ENCODE measurements at regions of chr19 and their contacts with region 1.

Region 1: GRCh38 chr19:42132851-42133528 is 744 bp upstream of the POU2F2 start:
- DNase-seq: peak in 1 of 2 donors; percentile 71
- H3K4me3 ChIP-seq: peak overlapping the region; percentile 14 to 51
- H3K27ac ChIP-seq: no peak overlapping the region
- H3K4me1 ChIP-seq: peaks cover 3 to 9% of the 10 kb centered on the region in 2 donors
- H3K27me3 ChIP-seq: peaks cover 4% of the 10 kb centered on the region
- CTCF ChIP-seq: peak; percentile 95 to 97 (median 95)

Region 2: DNA sequence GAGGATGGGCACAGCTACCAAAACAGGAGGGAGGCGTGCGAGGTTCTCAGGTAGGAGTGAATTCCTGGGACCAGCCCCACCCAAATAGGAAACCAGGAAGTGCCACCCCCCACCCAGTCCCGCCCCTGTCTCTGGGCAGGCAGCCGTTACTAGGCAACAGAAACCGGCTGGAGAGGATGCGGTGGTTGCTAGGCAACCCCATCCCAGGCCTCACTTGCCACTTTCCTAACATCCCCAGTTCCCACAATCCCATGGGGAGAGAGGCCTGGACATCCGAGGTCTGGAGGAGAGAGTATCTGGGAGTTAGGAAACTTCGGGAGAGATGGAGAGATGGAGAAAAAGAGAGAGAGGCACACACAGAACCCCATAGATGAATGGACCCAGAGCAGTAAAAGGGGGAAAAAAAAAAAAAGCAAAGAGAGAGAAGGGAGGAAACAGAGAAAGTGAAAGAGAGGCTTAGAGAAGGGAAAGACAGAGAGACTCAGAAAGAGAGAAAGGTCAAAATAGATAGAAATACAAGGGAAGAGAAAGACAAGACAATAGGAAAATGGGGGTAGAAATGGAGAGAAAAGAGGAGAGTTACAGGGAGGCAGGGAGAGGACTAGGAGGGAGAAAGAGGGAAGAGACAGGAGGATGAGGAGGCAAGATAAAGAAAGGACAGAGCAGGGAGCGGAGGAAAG is 66.8 kb before region 1 on chr19:
- intact Hi-C with region 1: no loop called
- DNase-seq: no peak
- H3K4me3 ChIP-seq: no peak overlapping the region
- H3K27ac ChIP-seq: no peak overlapping the region
- H3K4me1 ChIP-seq: peaks cover 0 to 7% of the 10 kb centered on the region in 2 donors
- H3K27me3 ChIP-seq: no peaks in the 10 kb centered on the region
- CTCF ChIP-seq: no peak

Region 3: GRCh38 chr19:42184401-42184861 is 51.4 kb after region 1 on chr19:
- intact Hi-C with region 1: loop called (anchors 2 kb)
- DNase-seq: peak in 1 of 2 donors; percentile 87
- H3K4me3 ChIP-seq: no peak overlapping the region
- H3K27ac ChIP-seq: no peak overlapping the region
- H3K4me1 ChIP-seq: no peaks in the 10 kb centered on the region
- H3K27me3 ChIP-seq: peaks cover 8% of the 10 kb centered on the region
- CTCF ChIP-seq: peak; percentile 68 to 82 (median 76)

Region 4: DNA sequence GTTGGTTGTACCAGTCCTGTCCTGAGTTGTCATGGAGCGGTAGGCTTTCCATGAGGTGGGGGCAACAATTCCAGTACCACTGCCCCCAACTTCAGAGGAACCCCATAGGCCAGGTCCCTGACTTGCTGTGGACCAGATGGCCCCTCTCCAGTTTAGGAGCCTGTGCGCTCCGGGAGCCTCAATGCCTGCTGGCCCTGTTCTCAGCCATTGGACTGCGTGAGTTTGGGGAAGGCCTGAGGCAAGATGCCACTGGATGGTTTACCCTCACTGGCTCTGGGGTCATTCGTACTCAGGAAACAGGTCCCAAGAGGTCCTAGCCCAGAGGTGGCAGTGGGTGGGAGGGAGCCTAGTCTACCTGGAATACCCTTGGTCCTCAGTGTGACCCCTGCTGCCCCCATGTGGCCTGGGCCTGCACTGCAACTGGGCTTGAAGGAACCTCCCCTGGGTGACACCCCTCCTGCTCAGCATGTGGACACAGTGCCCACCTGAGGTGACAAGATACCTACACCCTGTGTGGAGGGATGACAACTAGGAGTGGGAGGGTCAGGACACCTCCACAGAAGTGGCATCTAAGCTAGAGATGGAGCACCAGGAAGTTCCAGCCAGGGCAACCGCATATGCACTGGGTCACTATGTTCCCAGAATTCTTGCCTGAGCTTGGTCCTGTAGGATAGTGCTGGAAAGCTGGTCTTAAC is 163.0 kb after region 1 on chr19:
- intact Hi-C with region 1: loop called (anchors 2 kb)
- DNase-seq: peak in 1 of 2 donors; percentile 92
- H3K4me3 ChIP-seq: no peak overlapping the region
- H3K27ac ChIP-seq: no peak overlapping the region
- H3K4me1 ChIP-seq: no peaks in the 10 kb centered on the region
- H3K27me3 ChIP-seq: no peaks in the 10 kb centered on the region
- CTCF ChIP-seq: peak; percentile 89 to 96 (median 93)

Region 5: DNA sequence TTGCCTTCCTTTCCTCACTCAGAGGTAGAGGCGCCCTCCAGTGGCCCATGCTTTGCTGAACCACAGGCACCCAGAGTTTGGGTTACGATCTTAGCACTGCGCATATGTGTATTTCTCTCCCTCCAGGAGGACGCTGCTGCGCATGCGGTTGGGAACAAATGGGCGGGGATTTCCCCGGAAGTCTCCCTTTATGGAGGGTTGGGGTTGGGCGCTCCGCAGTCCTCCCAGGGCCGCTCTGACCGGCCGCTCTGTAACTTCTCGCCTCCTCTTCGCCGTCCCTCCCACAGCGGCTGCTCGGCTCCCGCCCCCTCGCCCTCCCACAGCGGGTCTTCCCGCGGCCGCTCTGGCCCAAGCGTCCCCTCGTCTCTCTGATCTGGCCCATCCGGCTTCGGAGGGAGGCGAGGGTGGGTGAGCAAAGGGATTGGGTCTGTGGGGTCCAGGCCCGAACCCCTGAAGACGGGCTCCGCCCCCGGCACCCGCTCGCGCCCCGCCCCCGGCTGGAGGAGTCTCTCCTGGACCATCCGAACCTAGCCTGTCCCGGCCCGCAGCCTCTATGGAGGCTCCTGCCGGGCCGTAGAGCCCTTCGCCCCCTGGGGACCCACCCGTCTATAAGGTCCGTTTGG is 192.4 kb after region 1 on chr19 and contains the start of gene MEGF8:
- intact Hi-C with region 1: loop called (anchors 2 kb)
- DNase-seq: peak; percentile 92 to 99
- H3K4me3 ChIP-seq: peak within 1 kb of the TSS; percentile 66 to 85
- H3K27ac ChIP-seq: peak within 1 kb of the TSS; percentile 38 to 48
- H3K4me1 ChIP-seq: peaks cover 5 to 29% of the 10 kb centered on the region in 2 donors
- H3K27me3 ChIP-seq: peaks cover 11% of the 10 kb centered on the region
- CTCF ChIP-seq: peak; percentile 81 to 89 (median 82)
- total RNA-seq, gene MEGF8: 61.8 TPM

Region 6: GRCh38 chr19:42360787-42361544 is 228.0 kb after region 1 on chr19:
- intact Hi-C with region 1: no loop called
- DNase-seq: no peak
- H3K4me3 ChIP-seq: no peak overlapping the region
- H3K27ac ChIP-seq: no peak overlapping the region
- H3K4me1 ChIP-seq: no peaks in the 10 kb centered on the region
- H3K27me3 ChIP-seq: no peaks in the 10 kb centered on the region
- CTCF ChIP-seq: no peak

Region 7: DNA sequence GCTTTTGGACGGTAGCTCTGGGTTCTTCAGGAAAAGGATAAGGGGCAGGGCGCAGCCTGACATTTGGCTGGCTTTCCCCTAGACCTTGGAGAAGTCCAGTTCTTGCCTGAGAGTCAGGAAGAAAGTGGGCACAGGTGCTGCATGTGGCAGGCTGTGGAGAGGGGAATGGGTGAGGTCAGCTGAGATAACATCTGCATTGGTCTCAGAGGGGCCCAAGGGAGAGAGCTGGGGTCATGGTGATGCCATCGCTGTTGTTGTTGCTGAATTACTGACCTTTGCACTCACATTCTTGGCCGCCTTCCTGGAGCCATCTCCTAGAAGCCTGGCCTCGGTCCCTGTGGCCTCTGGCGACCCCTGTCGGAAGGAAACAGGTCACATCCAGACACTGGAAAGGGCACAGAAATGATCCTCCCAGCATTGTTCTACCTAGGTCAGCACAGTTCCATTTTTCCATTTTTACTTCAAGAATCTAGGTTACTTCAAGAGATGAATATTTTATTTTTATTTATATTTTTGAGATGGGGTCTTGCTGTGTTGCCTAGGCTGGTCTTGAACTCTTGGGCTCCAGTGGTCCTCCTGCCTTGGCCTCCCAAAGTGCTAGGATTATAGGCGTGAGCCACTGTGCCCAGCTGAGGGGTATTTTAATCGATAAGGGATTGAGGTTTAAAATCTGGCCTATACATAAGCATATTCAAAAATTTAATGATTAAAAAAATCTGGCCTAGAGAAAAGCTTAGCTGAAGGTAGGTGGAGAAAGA is 300.7 kb after region 1 on chr19:
- intact Hi-C with region 1: loop called (anchors 10 kb)
- DNase-seq: peak in 1 of 2 donors; percentile 80
- H3K4me3 ChIP-seq: no peak overlapping the region
- H3K27ac ChIP-seq: no peak overlapping the region
- H3K4me1 ChIP-seq: no peaks in the 10 kb centered on the region
- H3K27me3 ChIP-seq: no peaks in the 10 kb centered on the region
- CTCF ChIP-seq: peak; percentile 6 to 31 (median 25)

Measured in ascending aorta (tissue), 2 donors.